Activated B cell treated with CpG ODN at 0.5 μM for 24 hours (primary cell): ENCODE measurements at regions of chr3 and their contacts with region 1.

Region 1: DNA sequence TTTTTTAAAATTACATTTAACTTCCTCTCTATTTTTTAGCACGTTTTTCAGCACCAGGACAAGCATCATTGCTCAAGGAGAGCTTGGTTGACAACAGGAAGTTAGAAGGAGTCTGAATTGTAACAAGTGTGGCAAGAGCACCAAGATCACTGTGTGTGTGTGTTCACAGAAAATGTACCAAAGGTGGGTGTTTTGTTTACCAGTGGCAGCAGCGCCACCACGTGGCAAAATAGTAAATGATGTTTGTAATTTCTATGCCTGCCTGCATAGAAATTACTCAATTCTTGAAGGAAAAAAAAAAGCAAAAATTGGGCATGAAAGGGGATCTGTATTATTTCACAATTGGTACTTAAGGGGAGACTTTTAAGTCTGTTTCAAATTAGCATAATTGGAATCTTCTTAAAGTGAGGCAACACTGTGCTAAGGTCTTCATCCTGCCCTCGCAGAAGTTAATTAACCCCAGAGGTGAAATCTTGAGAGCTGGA is 7.4 kb upstream of the U2SURP start:
- DNase-seq: peak; percentile 25
- ATAC-seq: peak; percentile 54
- H3K4me3 Mint-ChIP-seq: no peak overlapping the region
- H3K27ac Mint-ChIP-seq: no peak overlapping the region
- H3K4me1 Mint-ChIP-seq: peaks cover 15% of the 10 kb centered on the region
- H3K27me3 Mint-ChIP-seq: no peaks in the 10 kb centered on the region
- CTCF ChIP-seq: no peak

Region 2: GRCh38 chr3:142828703-142829305 is 165.2 kb before region 1 on chr3:
- CTCF ChIA-PET with region 1: interaction called, 3 read pairs
- POLR2A ChIA-PET with region 1: no interaction called
- intact Hi-C with region 1: loop called (anchors 1 kb)
- DNase-seq: no peak
- ATAC-seq: peak; percentile 75
- H3K4me3 Mint-ChIP-seq: no peak overlapping the region
- H3K27ac Mint-ChIP-seq: no peak overlapping the region
- H3K4me1 Mint-ChIP-seq: no peaks in the 10 kb centered on the region
- H3K27me3 Mint-ChIP-seq: peaks cover 12% of the 10 kb centered on the region
- CTCF ChIP-seq: no peak

Region 3: DNA sequence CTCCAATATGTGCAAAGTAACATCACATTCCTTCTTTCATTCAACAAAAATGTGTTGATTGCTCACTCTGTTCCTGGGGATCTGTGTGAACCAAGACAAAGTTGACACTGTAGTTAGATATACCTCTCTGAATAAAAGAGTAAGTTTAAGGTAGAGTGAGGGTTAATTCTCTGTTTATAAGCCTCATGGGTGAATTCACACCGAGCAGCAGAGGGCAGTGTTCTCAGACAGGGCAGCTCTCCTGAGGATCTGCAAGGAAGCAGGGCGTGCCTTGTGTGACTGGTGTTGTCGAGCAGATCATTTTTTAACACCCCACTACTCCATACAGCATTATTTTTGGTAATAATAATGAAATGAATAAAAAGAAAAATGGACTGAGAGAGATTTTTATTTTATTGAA is 64.9 kb before region 1 on chr3:
- CTCF ChIA-PET with region 1: no interaction called
- POLR2A ChIA-PET with region 1: no interaction called
- intact Hi-C with region 1: loop called (anchors 2 kb)
- DNase-seq: no peak
- ATAC-seq: no peak
- H3K4me3 Mint-ChIP-seq: no peak overlapping the region
- H3K27ac Mint-ChIP-seq: no peak overlapping the region
- H3K4me1 Mint-ChIP-seq: no peaks in the 10 kb centered on the region
- H3K27me3 Mint-ChIP-seq: peaks cover 19% of the 10 kb centered on the region
- CTCF ChIP-seq: no peak